ENCODE measurements at regions of chr22 and their contacts with region 1.

Region 1: GRCh38 chr22:17773606-17774205 is 563 bp downstream of the BID start:
- DNase-seq: peak; percentile 79
- H3K4me3 Mint-ChIP-seq: peak overlapping the region; percentile 82
- H3K27ac Mint-ChIP-seq: peak overlapping the region; percentile 66
- H3K4me1 Mint-ChIP-seq: peaks cover 76% of the 10 kb centered on the region
- H3K27me3 Mint-ChIP-seq: no peaks in the 10 kb centered on the region

Region 2: GRCh38 chr22:17628304-17629166 is 145.2 kb before region 1 on chr22 and contains the start of gene ATP6V1E1:
- CTCF ChIA-PET with region 1: no interaction called
- intact Hi-C with region 1: loop called (anchors 2 kb)
- DNase-seq: peak; percentile 98
- H3K4me3 Mint-ChIP-seq: peak within 1 kb of the TSS; percentile 98
- H3K27ac Mint-ChIP-seq: peak within 1 kb of the TSS; percentile 92
- H3K4me1 Mint-ChIP-seq: peaks cover 26% of the 10 kb centered on the region
- H3K27me3 Mint-ChIP-seq: no peaks in the 10 kb centered on the region
- total RNA-seq, gene ATP6V1E1: 74.5 to 75.5 TPM

Region 3: GRCh38 chr22:17638432-17639246 is 135.1 kb before region 1 on chr22 and contains the start of gene BCL2L13:
- CTCF ChIA-PET with region 1: no interaction called
- intact Hi-C with region 1: loop called (anchors 1 kb)
- DNase-seq: peak; percentile 94
- H3K4me3 Mint-ChIP-seq: peak within 1 kb of the TSS; percentile 85
- H3K27ac Mint-ChIP-seq: peak within 1 kb of the TSS; percentile 89
- H3K4me1 Mint-ChIP-seq: peaks cover 22% of the 10 kb centered on the region
- H3K27me3 Mint-ChIP-seq: no peaks in the 10 kb centered on the region
- total RNA-seq, gene BCL2L13: 32.2 to 32.6 TPM

Region 4: DNA sequence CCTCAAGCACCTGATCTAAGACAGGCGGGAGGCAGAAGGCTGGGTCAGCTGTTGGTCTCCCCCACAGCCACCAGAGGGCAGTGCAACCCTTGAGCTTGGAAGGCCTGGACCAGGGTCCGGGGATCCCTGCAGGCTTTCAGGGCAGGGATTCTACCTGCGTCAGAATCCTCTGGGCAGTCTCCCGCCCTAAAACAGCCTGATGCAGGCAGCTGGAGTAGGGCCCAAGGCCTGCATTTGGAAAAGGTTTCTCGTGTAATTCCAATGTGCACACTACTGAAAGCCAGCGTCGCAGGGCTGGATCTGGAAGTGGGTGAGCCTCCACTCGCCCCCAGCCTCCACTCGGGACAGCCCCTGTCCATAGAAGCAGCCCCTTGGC is 31.2 kb before region 1 on chr22:
- CTCF ChIA-PET with region 1: interaction called, 112 read pairs
- intact Hi-C with region 1: no loop called
- DNase-seq: peak; percentile 79
- H3K4me3 Mint-ChIP-seq: no peak overlapping the region
- H3K27ac Mint-ChIP-seq: no peak overlapping the region
- H3K4me1 Mint-ChIP-seq: peaks cover 4% of the 10 kb centered on the region
- H3K27me3 Mint-ChIP-seq: no peaks in the 10 kb centered on the region

Region 5: GRCh38 chr22:18001040-18001893 is 227.6 kb after region 1 on chr22:
- CTCF ChIA-PET with region 1: interaction called, 3 read pairs
- intact Hi-C with region 1: loop called (anchors 5 kb)
- DNase-seq: peak; percentile 77
- H3K4me3 Mint-ChIP-seq: peak overlapping the region; percentile 91
- H3K27ac Mint-ChIP-seq: peak overlapping the region; percentile 93
- H3K4me1 Mint-ChIP-seq: peaks cover 43% of the 10 kb centered on the region
- H3K27me3 Mint-ChIP-seq: peaks cover 5% of the 10 kb centered on the region

Region 6: GRCh38 chr22:18152519-18152918 is 378.8 kb after region 1 on chr22:
- CTCF ChIA-PET with region 1: no interaction called
- intact Hi-C with region 1: loop called (anchors 5 kb)
- DNase-seq: peak; percentile 54
- H3K4me3 Mint-ChIP-seq: peak overlapping the region; percentile 54
- H3K27ac Mint-ChIP-seq: no peak overlapping the region
- H3K4me1 Mint-ChIP-seq: peaks cover 28% of the 10 kb centered on the region
- H3K27me3 Mint-ChIP-seq: no peaks in the 10 kb centered on the region

Measured in activated naive CD4-positive, alpha-beta T cell treated with anti-CD3 and anti-CD28 coated beads for 36 hours (primary cell).